WTC11 (cell line): ENCODE measurements at regions of chr7 and their contacts with region 1.

Region 1: DNA sequence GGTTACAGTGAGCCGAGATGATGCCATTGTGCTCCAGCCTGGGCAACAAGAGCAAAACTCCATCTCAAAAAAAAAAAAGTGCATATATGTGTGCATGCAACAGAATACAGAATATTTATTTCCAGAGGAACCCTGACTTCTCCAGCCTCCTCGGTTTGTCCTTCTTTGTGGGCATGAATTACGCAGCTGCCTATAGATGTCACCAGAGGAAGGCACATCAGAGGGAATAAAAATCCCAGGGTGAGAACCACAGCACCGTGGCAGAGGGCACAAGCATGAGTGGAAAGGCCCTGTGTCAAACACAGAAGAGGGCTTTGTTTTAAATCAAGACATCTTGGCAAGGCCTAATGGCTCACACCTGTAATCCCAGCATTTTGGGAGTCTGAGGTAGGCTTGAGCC is 24.4 kb upstream of the OCM2 start:
- DNase-seq: no peak
- ATAC-seq: no peak
- H3K4me3 Mint-ChIP-seq: no peak overlapping the region
- H3K27ac Mint-ChIP-seq: no peak overlapping the region
- H3K4me1 Mint-ChIP-seq: no peaks in the 10 kb centered on the region
- H3K27me3 Mint-ChIP-seq: no peaks in the 10 kb centered on the region
- CTCF ChIP-seq: no peak

Region 2: DNA sequence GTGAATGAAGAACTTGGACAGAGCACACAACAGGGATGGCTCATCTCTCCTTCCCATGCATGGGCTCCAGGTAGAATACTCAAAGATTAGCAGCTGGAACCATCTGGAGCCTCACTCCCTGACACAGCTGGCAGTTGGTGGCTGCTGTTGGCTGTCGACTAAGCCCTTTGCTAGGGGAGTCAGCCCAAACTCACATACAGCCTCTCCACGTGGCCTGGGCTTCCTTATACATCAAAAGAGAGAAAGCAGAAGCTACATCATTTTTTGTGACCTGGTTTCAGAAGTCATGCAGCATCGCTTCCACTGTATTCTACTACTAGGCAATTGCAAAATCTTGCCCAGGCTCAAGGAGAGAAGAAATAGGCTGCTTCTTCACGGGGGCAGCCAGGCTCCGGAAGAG is 166.6 kb before region 1 on chr7:
- CTCF ChIA-PET with region 1: interaction called, 11 read pairs
- POLR2A ChIA-PET with region 1: no interaction called
- DNase-seq: no peak
- ATAC-seq: no peak
- H3K4me3 Mint-ChIP-seq: no peak overlapping the region
- H3K27ac Mint-ChIP-seq: no peak overlapping the region
- H3K4me1 Mint-ChIP-seq: no peaks in the 10 kb centered on the region
- H3K27me3 Mint-ChIP-seq: no peaks in the 10 kb centered on the region
- CTCF ChIP-seq: no peak

Region 3: DNA sequence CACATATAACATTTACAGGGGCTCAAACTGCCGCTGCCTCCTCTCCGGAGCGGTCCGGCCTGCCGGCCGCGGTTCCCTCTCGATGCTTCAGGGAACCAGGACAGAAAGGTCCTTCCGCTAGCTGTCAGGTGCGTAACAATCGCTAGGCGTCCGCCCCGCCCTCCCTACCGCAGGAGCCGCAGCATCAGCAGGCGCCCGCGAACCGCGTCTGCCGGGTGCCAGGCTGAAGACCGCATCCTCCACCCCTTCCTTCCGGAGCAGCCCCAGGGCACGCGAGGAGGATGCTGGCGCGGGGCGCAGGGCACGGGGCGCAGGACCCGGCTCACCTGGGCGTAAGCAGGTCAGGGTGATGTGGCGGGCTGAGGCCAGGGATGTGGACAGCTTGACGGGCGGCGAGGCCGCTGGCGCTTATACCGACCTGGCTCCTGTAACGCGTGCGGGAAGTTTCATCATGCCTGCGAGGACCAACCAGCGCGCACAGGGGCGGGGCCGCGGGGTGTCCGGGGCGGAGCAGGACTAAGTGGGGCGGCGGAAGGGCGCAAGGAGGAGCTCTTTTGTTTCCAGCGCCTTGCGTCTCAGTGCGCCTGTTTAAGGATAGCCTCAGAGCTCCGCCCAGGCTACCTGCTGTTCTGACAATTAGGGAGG is 142.2 kb before region 1 on chr7 and contains the start of gene ASNS:
- CTCF ChIA-PET with region 1: interaction called, 12 read pairs
- POLR2A ChIA-PET with region 1: interaction called, 14 read pairs
- DNase-seq: peak; percentile 97
- ATAC-seq: peak; percentile 94
- H3K4me3 Mint-ChIP-seq: peak within 1 kb of the TSS; percentile 88
- H3K27ac Mint-ChIP-seq: peak within 1 kb of the TSS; percentile 45; the same call in 1 of the 2 replicates
- H3K4me1 Mint-ChIP-seq: peaks cover 29% of the 10 kb centered on the region
- H3K27me3 Mint-ChIP-seq: peaks cover 47% of the 10 kb centered on the region
- CTCF ChIP-seq: no peak
- total RNA-seq, gene ASNS: 71.3 to 111 TPM (median 74.5 TPM) in 3 replicates

Region 4: DNA sequence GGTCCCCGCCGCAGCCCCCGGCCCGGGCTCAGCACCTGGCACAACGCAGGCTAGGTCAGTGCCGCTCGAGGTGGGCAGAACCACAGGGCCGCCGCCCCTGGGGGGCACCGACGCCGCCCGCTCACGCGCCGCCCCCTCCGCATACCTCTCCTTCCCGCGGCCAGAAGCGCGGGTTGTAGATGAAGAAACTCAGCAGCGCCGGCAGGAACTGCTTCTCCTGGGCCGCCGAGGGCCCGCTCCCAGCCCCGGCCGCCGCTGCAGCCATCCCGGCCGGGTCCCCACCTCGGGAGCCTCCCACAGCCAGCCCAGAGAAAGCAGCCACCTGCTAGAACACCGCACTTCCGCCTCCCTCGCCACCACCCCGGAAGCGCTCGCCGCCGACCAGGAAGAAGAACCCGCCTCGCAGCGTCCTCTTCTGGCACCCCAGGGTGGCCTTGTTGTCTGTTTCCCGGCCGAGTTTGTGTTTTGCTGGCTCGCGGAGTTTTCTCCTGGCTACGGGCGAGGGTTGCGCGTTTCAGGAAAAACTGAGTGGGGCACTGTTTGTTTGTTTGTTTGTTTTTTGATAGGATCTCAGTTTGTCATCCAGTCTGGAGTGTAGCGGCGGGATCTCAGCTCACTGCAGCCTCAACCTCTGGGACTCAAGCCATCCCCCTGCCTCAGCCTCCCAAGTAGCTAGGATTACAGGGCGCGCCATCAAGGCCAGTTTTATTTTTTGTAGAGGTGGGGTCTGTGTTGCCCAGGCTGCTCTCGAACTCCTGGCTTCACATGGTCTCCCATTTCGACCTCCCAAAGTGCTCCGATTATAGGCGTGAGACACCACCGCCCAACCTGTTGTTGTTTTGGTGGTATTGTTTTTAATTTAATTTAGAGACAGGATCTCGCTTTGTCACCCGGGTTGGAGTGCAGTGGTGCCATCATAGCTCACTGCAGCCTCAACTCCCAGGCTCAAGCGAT is 42.1 kb before region 1 on chr7:
- CTCF ChIA-PET with region 1: interaction called, 15 read pairs
- POLR2A ChIA-PET with region 1: interaction called, 6 read pairs
- DNase-seq: peak; percentile 52
- ATAC-seq: peak; percentile 71
- H3K4me3 Mint-ChIP-seq: peak overlapping the region; percentile 93
- H3K27ac Mint-ChIP-seq: peak overlapping the region; percentile 74; the same call in 1 of the 2 replicates
- H3K4me1 Mint-ChIP-seq: peaks cover 13% of the 10 kb centered on the region
- H3K27me3 Mint-ChIP-seq: no peaks in the 10 kb centered on the region
- CTCF ChIP-seq: no peak

Region 5: DNA sequence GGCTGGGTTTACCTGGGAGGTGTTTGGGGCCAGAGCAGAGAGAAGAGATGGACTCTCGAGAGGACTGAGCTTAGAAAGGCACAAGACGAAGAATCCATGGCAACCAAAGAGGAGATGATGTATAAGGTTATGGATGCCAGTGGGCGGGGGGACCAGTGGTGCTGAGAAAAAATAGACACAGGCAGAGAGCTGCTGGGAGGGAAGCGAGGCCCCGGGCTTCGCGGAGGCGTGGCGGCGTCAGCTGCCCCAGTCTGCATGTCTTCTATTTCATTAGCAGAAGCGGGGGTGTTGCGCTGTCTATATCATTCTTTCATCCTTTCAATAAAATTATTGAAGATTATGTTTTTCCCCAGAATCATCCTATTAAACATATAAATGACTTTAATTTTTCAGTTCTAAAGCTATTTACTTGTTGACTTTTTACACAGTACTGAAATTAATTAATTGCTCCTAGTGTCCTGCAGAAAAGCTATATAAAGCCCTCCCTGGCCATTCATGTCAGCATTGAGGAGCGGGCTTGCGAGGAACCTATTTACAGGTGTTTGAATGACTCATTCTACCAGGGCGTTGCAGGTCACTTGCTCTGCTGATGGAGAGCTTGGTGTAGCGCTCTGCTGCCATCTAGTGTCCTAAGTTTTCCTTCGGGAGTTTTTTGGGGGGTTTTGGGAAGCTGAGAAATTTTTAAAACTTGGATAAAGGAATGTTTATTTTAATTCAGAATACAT is 154.0 kb after region 1 on chr7:
- CTCF ChIA-PET with region 1: interaction called, 25 read pairs
- POLR2A ChIA-PET with region 1: no interaction called
- DNase-seq: peak; percentile 72
- ATAC-seq: peak; percentile 76
- H3K4me3 Mint-ChIP-seq: no peak overlapping the region
- H3K27ac Mint-ChIP-seq: peak overlapping the region; percentile 70; the same call in 1 of the 2 replicates
- H3K4me1 Mint-ChIP-seq: peaks cover 26% of the 10 kb centered on the region
- H3K27me3 Mint-ChIP-seq: no peaks in the 10 kb centered on the region
- CTCF ChIP-seq: peak; percentile 67